ENCODE measurements at regions of chr6 and their contacts with region 1.

Region 1: DNA sequence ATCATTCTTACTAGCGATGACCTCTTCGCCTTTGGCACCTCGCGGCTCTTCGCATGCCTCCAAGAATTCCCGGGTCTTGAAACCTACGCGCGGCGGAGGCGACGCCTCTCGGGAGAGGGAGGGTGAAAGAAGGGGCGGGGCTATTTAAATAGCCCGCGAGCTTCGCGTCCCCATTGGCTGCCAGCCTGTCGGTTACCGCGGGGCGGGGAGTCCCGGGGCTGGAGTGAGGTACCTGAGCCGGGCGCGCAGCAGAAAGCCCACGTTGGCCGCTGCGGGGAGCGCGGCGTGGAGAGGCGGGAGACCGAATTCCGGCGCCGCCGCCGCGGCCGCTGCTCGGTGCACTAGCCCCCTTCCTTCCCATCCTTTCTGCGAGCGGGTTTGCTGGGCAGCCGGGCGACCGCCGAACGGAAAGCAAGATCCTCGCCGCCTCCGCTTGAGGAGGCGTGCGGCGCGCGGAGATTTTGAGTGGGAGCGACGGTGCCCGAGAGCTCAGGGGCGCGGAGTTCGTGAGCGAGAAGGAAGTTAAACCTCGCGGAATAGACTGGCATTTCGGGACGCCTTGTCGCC is at the start of gene BMP6:
- DNase-seq: peak; percentile 95
- H3K4me3 ChIP-seq: peak within 1 kb of the TSS; percentile 49 to 62
- H3K27ac ChIP-seq: no peak within 1 kb of the TSS
- H3K4me1 ChIP-seq: peaks cover 12% of the 10 kb centered on the region
- H3K27me3 ChIP-seq: no peaks in the 10 kb centered on the region
- CTCF ChIP-seq: no peak
- POLR2A ChIP-seq: no peak
- total RNA-seq, gene BMP6: 11.4 to 13.6 TPM

Region 2: DNA sequence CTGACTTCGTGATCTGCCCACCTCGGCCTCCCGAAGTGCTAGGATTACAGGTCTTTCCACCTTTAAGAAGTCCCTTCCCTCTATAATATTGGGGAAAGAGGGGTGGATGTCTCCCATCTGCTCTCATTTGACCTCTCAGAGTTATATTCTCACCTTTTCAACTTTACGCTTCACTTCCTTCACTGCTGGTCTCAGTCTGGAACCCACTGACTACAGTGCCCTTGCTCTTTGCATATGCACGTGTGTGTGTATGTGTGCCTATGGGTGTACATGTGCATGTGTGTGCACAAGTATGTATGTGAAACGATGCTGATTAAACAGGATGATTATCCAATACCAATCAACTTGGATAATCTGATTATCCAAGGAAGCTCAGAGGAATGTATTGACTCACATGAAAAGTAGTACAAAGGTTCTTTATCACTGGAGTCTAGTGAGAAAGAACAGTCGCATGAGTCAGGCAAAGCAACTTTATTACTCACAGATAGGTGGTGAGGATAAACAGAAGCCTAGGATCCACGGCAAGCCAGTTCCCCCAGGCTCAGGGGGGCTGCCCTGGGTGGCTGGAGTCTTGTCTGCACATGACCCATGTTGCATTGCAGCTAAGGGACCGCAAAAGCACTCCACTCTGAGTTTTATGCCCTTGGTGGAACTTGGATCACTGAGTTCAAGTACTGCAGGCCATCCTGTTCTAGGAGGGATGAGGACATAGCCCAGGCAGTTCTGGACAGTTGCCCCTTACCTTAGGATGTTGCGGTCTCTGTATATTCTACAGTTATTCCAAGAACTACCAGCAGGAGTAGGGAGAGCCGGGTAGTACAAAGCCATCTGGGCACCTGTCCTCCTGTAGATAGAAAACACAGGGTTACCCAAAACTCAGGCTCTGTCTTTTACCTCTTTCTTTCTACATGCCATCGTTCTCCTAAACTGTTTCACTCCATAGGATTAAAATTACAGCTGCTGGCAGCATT is 85.0 kb before region 1 on chr6:
- intact Hi-C with region 1: no loop called
- DNase-seq: no peak
- H3K4me3 ChIP-seq: no peak overlapping the region
- H3K27ac ChIP-seq: no peak overlapping the region
- H3K4me1 ChIP-seq: no peaks in the 10 kb centered on the region
- H3K27me3 ChIP-seq: no peaks in the 10 kb centered on the region
- CTCF ChIP-seq: no peak
- POLR2A ChIP-seq: no peak

Region 3: DNA sequence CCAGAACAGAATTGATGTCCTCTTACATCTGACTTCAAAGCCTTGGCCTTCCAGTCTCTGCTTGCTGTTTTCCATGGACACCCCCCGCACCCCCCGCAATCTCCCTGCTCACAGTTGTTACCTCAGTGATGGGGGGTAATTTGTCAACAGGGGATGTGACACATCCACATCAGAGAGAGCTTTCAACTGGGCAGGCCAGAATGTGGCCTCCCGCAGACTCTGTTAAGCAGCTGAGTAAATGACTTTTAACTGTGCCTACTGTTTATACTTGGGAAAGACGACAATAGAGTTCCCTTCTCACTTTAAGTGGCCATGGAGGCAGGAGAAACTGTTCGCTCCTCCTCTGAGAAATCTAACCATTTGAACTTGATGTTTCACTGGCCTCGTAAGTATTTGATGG is 133.7 kb after region 1 on chr6:
- intact Hi-C with region 1: no loop called
- DNase-seq: no peak
- H3K4me3 ChIP-seq: no peak overlapping the region
- H3K27ac ChIP-seq: no peak overlapping the region
- H3K4me1 ChIP-seq: no peaks in the 10 kb centered on the region
- H3K27me3 ChIP-seq: no peaks in the 10 kb centered on the region
- CTCF ChIP-seq: no peak
- POLR2A ChIP-seq: no peak

Region 4: DNA sequence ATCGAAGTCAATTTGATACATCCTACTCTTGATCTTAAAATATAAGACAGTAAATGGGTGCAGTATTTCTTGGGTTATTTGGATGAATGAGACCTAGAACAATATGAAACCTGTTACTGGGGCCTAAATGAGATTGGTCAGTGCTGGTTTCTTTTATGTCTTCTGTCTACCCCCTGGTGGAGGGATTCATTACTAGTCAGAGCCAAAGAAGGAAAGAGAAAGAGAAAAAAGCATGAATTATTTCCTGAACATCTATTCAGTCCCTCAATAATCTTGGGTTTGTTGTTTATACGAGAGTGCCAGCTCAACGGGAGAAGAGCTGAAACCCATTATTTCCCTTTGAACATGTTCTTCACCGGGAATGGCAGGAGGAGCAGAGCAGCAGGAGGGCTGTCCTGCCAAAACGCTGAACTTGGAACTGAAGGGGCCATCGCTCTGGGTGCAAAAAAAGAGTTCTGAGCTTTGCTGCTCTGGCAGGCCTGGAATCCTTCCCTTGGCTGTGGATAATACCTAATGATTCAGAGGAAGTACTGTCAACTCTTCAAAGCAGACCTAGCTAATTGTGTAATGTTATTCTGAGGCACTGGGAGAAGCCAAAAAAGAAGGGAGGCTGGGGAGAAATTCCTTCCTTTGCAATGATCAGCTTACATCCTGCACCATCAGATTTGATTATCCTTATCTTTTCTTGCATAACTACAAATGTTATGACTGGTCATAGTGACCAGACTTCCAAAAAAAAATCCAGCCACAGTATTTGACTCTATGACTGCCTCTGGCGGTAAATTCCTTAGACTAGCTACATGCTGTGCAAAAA is 266.3 kb after region 1 on chr6:
- intact Hi-C with region 1: loop called (anchors 5 kb)
- DNase-seq: no peak
- H3K4me3 ChIP-seq: no peak overlapping the region
- H3K27ac ChIP-seq: no peak overlapping the region
- H3K4me1 ChIP-seq: no peaks in the 10 kb centered on the region
- H3K27me3 ChIP-seq: no peaks in the 10 kb centered on the region
- CTCF ChIP-seq: peak; percentile 36 to 55 (median 51)
- POLR2A ChIP-seq: no peak

Region 5: GRCh38 chr6:8063761-8064637 is 338.1 kb after region 1 on chr6 and contains the start of gene BLOC1S5:
- intact Hi-C with region 1: loop called (anchors 5 kb)
- DNase-seq: peak; percentile 98
- H3K4me3 ChIP-seq: peak within 1 kb of the TSS; percentile 90 to 92
- H3K27ac ChIP-seq: peak within 1 kb of the TSS; percentile 45 to 89
- H3K4me1 ChIP-seq: no peaks in the 10 kb centered on the region
- H3K27me3 ChIP-seq: no peaks in the 10 kb centered on the region
- CTCF ChIP-seq: peak in 2 of 3 experiments; percentile 32 to 52
- POLR2A ChIP-seq: no peak
- total RNA-seq, gene BLOC1S5: 10.9 to 12.1 TPM

Region 6: GRCh38 chr6:8166156-8166555 is 440.2 kb after region 1 on chr6:
- intact Hi-C with region 1: no loop called
- DNase-seq: no peak
- H3K4me3 ChIP-seq: no peak overlapping the region
- H3K27ac ChIP-seq: no peak overlapping the region
- H3K4me1 ChIP-seq: no peaks in the 10 kb centered on the region
- H3K27me3 ChIP-seq: no peaks in the 10 kb centered on the region
- CTCF ChIP-seq: no peak
- POLR2A ChIP-seq: no peak

Measured in testis (tissue), 5 donors.